ENCODE measurements at regions of chr9 and their contacts with region 1.

Region 1: DNA sequence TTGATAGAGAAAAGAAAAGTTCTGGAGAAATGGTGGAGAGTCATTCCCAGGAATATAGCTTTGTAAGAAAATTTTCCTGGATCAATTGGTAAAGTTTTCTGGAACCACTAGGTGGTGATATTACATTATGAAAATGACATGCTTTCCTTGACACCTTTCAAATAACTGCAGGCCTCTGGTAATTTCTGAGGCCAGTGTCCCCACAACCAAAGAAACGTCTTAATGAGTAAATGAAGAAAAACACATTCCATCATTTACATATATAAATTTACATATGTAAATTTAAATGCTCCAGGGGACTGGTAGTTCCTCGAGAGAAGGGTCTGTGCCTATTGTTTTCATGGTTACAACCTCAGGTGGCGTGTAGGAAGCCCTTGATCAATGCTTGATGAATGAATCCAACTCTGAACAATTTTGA is 17.2 kb upstream of the RGS3 start:
- DNase-seq: peak; percentile 74
- CTCF ChIP-seq: peak; percentile 53

Region 2: DNA sequence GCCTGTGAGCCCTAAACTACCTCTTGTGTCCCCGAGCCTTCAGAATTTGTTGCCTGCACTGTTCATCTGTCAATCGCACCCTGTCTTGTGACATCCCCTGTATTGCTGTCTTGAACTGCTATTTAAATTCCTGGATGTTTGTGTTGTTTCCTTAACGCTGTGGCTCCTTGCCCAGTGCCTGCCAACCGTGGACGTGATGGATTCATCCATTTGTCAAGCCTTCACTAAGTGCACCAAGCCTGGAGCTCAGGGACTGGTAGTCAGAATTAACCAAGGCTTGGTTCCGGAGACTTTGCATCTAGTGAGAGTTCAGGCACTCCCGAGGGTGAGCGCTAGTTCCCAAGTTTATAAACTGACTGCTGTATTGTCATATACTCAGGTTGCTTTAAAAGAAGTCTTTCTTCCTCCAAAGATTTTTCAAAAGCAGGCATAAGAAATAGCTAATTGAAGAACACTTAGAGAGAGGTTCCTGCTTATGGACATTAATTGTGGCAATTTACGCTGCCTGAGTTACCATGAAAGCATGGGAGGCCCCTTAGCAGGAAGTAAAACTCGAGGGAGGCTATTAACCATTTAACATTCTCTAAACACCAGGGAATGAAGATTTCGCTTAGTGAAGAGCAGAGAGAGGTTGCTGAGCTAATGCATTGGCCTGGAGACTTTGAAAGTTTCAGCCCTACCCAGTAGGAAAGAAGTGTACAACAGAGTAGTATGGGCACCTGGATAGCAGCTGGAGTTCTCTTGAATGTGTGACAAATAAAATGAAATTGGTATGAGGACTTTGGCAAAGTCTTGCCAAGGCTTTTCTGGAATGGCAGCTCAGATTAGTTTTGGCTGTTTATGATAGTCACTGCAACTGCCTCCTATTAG is 46.2 kb after region 1 on chr9:
- CTCF ChIA-PET with region 1: interaction called, 13 read pairs
- POLR2A ChIA-PET with region 1: no interaction called
- DNase-seq: no peak
- CTCF ChIP-seq: no peak

Region 3: GRCh38 chr9:113511856-113512761 is 65.8 kb after region 1 on chr9:
- CTCF ChIA-PET with region 1: interaction called, 17 read pairs
- POLR2A ChIA-PET with region 1: no interaction called
- DNase-seq: peak; percentile 81
- CTCF ChIP-seq: no peak

Region 4: GRCh38 chr9:113523421-113524236 is 77.3 kb after region 1 on chr9:
- CTCF ChIA-PET with region 1: interaction called, 17 read pairs
- POLR2A ChIA-PET with region 1: no interaction called
- DNase-seq: peak; percentile 80
- CTCF ChIP-seq: no peak

Region 5: DNA sequence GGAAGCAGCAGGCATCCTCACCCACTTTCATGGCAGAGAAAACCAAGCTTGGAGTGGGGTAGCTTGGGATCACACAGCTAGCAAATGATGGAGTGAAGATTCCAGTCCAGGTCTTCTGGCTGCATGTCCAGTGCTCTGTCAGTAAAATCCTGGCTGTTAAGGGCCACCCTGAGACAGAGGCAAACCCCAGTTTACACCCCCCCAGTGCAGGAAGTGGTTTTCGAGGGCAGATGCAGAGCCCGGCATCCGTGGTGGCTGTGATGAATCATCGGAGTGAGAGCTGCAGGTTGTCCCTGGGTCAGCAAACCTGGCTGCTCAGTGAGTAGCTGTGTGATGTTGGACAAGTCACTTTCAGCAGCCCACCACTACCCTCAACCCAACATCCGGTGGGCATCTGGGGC is 132.6 kb after region 1 on chr9:
- CTCF ChIA-PET with region 1: interaction called, 23 read pairs
- POLR2A ChIA-PET with region 1: no interaction called
- DNase-seq: peak; percentile 87
- CTCF ChIP-seq: no peak

Region 6: DNA sequence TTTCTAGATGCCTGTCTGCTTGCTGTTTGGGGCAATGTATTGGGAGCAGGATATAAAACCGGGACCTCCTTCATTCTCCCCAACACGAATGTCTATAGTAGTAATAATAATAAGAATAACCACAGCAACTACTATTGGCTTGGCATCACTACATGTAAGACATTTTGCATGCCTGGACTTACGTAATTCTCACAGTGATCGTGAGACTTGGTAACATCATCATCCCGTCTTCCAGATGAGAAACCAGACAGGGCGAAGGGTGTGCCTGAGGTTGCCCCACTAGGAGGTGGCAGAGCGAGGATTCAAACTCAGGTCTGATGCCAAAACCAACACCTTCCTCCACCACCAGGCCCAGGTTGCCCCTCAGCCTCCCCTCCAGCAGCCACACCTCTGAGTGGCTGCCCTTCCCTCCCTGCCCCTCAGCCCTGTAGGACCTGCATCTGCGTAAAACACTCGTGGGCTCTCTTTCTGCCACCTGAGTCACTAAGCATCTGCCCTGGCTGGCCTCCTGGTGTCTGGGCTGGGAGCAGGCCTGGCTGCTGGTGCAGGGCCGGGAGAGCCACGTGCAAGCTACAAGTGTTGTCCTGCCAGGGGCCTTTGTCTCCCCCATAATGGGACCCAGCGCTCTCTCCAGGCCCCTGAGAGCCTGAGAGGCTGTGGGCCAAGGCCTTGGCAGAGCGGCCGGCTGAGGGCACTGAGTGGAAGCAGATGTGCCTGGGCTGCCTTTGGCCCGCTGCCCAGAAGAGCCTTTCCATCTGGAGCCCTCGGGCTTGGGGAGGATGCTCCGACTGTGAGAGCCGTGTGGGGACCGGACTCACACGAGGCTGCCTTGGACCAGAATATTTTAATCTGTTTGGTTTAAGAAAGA is 202.5 kb after region 1 on chr9:
- CTCF ChIA-PET with region 1: interaction called, 171 read pairs
- POLR2A ChIA-PET with region 1: no interaction called
- DNase-seq: no peak
- CTCF ChIP-seq: no peak

Measured in GM10248 (cell line).